ENCODE measurements at regions of chr7 and their contacts with region 1.

Region 1: GRCh38 chr7:31122649-31123058 is 70.5 kb downstream of the ADCYAP1R1 start:
- DNase-seq: peak; percentile 54
- ATAC-seq: peak; percentile 82

Region 2: DNA sequence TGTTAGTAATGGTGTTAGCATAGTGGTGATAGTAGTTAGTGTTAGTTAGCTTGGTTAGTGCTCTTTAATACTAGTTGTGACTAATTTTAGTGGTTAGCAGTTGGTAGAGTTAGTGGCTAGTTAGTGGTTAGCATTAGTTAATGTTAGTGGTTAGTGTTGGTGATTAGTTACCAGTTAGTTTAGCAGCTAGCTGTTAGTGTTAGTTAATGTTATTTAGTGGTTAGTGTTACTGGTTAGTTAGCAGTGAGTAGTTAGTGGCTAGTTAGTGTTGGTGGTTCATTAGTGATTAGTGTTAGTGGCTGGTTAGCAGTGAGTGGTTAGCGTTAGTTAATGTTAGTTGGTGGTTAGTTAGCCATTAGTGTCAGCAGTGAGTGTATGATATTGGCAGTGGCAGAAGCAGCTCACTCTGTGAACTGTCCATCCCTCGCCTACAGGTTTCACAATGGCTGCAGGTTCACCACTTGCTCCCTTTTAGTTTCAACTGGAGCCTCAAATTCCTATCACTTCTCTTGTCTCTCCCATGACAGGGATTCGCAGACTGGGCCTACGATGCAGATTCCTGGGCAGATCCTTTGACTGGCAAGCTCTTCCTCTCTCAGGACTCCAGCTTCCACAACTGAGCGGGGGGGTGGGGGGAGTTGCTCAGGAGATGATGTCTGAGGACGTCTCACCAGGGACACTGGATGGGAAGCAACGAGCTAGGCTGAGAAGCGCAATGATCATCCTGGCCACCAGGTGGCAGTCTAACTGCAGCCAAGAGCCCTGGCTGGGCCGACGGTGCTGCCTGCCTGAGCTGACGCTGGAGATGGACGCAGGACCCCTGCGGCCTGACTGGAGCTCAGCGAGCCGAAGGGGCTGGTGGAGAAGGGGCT is 139.4 kb before region 1 on chr7:
- intact Hi-C with region 1: loop called (anchors 5 kb)
- DNase-seq: peak; percentile 91
- ATAC-seq: peak; percentile 90